IMR-90 (cell line): ENCODE measurements at regions of chr2 and their contacts with region 1.

Region 1: GRCh38 chr2:223041527-223042109 is 10.4 kb upstream of the KCNE4 start:
- DNase-seq: peak; percentile 99
- ATAC-seq: peak; percentile 95
- H3K4me3 ChIP-seq: no peak overlapping the region
- H3K27ac ChIP-seq: peak overlapping the region; percentile 94
- H3K4me1 ChIP-seq: peaks cover 13% of the 10 kb centered on the region
- H3K27me3 ChIP-seq: no peaks in the 10 kb centered on the region
- CTCF ChIP-seq: no peak
- POLR2A ChIP-seq: peak; percentile 77
- RAD21 ChIP-seq: peak; percentile 29; the same call in 1 of the 2 replicates

Region 2: GRCh38 chr2:222993920-222994650 is 47.5 kb before region 1 on chr2:
- CTCF ChIA-PET with region 1: no interaction called
- POLR2A ChIA-PET with region 1: no interaction called
- dilution Hi-C with region 1: no loop called
- in situ Hi-C with region 1: no loop called
- intact Hi-C with region 1: loop called (anchors 2 kb)
- DNase-seq: peak; percentile 98
- ATAC-seq: peak; percentile 83
- H3K4me3 ChIP-seq: no peak overlapping the region
- H3K27ac ChIP-seq: peak overlapping the region; percentile 88; the same call in 1 of the 2 replicates
- H3K4me1 ChIP-seq: peaks cover 12% of the 10 kb centered on the region
- H3K27me3 ChIP-seq: no peaks in the 10 kb centered on the region
- CTCF ChIP-seq: 0 out of 2 replicates have a peak, but pooled peaks have one; percentile 1
- POLR2A ChIP-seq: no peak
- RAD21 ChIP-seq: 0 out of 2 replicates have a peak, but pooled peaks have one; percentile 9